ENCODE measurements at regions of chr1 and their contacts with region 1.

Region 1: DNA sequence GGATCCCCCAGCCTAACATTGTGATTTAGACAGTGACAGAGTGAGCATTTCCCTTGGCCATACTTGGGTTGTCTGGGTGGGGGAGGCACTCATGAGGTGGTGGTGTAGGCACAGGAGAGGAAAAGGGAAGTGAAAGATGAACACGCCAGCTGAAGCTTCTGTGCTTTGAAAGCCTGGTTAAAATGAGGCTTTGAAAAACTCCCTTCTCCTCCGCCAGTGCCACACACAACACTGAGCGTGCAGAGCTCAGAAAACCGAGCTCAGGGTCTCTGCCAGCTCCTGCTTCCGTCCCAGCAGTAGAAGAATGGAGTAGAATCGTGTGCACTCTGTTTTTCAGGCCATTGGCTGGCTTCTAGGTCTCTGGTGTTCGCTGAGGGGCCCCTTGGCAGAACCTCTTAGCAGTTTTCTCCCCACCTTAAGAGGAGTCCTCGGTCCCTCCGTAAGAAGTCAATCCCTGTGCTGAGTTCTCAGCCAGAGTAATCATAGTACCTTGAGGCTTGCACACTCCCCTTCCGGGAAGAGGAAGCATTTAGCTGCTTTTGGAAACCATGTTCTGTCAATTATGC is 12.9 kb downstream of the PLEKHM2 start:
- DNase-seq: peak; percentile 93
- ATAC-seq: peak; percentile 97
- H3K4me3 ChIP-seq: peak overlapping the region; percentile 62
- H3K27ac ChIP-seq: peak overlapping the region; percentile 90
- H3K4me1 ChIP-seq: peaks cover 14% of the 10 kb centered on the region
- H3K27me3 ChIP-seq: no peaks in the 10 kb centered on the region
- CTCF ChIP-seq: no peak
- EP300 ChIP-seq: peak; percentile 83 to 95; a peak in 3 of 4 replicates
- POLR2A ChIP-seq: peak; percentile 73
- RAD21 ChIP-seq: no peak; the same call in 1 of the 2 replicates

Region 2: DNA sequence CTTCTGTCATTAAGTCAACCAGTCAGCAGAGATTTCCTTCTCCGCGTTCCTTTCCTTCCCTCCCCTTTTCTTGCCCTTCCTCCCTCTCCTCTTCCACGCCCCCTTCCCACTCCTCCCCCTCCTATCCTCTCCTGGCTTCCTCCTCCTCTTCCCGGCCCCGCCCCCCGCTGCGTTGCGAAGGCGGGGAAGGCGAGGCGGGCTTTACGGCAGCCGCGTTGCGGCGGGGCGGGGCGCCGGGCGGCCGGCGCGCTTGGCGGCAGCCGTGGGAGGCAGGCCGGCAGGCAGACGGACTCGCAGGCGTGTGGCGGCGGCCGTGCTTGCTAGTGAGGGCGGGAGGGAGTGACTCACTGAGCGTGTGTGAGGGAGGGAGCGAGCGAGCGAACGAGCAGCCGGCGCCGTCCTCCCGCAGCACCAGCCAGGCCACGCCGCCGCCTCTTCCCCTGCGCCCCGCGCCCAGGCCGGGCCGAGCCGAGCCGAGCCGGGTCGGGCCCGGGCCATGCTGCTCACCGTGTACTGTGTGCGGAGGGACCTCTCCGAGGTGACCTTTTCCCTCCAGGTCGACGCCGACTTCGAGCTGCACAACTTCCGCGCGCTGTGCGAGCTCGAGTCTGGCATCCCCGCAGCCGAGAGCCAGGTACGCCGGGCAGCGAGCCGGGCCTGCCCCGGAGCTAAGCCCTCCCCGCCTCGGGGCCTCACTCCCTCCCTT is 79.7 kb before region 1 on chr1 and contains the start of gene DDI2:
- CTCF ChIA-PET with region 1: interaction called, 5 read pairs
- POLR2A ChIA-PET with region 1: interaction called, 9 read pairs
- RAD21 ChIA-PET with region 1: interaction called, 9 read pairs
- SMC1A ChIA-PET with region 1: interaction called, 5 read pairs
- in situ Hi-C with region 1: no loop called
- intact Hi-C with region 1: loop called (anchors 5 kb)
- DNase-seq: peak; percentile 79
- ATAC-seq: peak; percentile 92
- H3K4me3 ChIP-seq: peak within 1 kb of the TSS; percentile 90
- H3K27ac ChIP-seq: peak within 1 kb of the TSS; percentile 92
- H3K4me1 ChIP-seq: peaks cover 14% of the 10 kb centered on the region
- H3K27me3 ChIP-seq: no peaks in the 10 kb centered on the region
- CTCF ChIP-seq: no peak
- EP300 ChIP-seq: no peak
- POLR2A ChIP-seq: peak; percentile 95
- RAD21 ChIP-seq: no peak
- polyA plus RNA-seq, gene DDI2: 3.3 to 3.6 TPM

Region 3: GRCh38 chr1:15667362-15667761 is 29.7 kb before region 1 on chr1:
- CTCF ChIA-PET with region 1: no interaction called
- POLR2A ChIA-PET with region 1: interaction called, 4 read pairs
- RAD21 ChIA-PET with region 1: interaction called, 9 read pairs
- SMC1A ChIA-PET with region 1: interaction called, 11 read pairs
- in situ Hi-C with region 1: no loop called
- intact Hi-C with region 1: no loop called
- DNase-seq: no peak
- ATAC-seq: no peak
- H3K4me3 ChIP-seq: no peak overlapping the region
- H3K27ac ChIP-seq: no peak overlapping the region
- H3K4me1 ChIP-seq: no peaks in the 10 kb centered on the region
- H3K27me3 ChIP-seq: no peaks in the 10 kb centered on the region
- CTCF ChIP-seq: no peak
- EP300 ChIP-seq: no peak
- POLR2A ChIP-seq: 0 out of 2 replicates have a peak, but pooled peaks have one; percentile 21
- RAD21 ChIP-seq: no peak

Region 4: DNA sequence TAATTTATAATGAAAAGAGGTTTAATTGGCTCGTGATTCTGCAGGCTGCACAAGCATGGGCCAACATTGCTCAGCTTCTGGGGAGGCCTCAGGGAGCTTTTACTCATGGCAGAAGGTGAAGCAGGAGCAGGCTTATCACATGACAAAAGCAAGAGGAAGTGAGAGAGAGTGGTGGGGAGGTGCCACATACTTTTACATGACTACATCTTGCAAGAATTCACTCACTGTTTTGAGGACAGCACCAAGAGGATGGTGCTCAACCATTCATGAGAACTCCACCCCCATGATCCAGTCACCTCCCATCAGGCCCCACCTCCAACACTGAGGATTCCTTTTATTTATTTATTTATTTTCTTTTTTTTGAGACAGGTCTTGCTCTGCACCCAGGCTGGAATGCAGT is 18.5 kb before region 1 on chr1:
- CTCF ChIA-PET with region 1: interaction called, 5 read pairs
- POLR2A ChIA-PET with region 1: interaction called, 5 read pairs
- RAD21 ChIA-PET with region 1: interaction called, 22 read pairs
- SMC1A ChIA-PET with region 1: interaction called, 25 read pairs
- in situ Hi-C with region 1: no loop called
- intact Hi-C with region 1: no loop called
- DNase-seq: peak; percentile 53
- ATAC-seq: peak; percentile 86
- H3K4me3 ChIP-seq: no peak overlapping the region
- H3K27ac ChIP-seq: no peak overlapping the region
- H3K4me1 ChIP-seq: peaks cover 6% of the 10 kb centered on the region
- H3K27me3 ChIP-seq: no peaks in the 10 kb centered on the region
- CTCF ChIP-seq: no peak
- EP300 ChIP-seq: no peak
- POLR2A ChIP-seq: no peak
- RAD21 ChIP-seq: no peak

Region 5: DNA sequence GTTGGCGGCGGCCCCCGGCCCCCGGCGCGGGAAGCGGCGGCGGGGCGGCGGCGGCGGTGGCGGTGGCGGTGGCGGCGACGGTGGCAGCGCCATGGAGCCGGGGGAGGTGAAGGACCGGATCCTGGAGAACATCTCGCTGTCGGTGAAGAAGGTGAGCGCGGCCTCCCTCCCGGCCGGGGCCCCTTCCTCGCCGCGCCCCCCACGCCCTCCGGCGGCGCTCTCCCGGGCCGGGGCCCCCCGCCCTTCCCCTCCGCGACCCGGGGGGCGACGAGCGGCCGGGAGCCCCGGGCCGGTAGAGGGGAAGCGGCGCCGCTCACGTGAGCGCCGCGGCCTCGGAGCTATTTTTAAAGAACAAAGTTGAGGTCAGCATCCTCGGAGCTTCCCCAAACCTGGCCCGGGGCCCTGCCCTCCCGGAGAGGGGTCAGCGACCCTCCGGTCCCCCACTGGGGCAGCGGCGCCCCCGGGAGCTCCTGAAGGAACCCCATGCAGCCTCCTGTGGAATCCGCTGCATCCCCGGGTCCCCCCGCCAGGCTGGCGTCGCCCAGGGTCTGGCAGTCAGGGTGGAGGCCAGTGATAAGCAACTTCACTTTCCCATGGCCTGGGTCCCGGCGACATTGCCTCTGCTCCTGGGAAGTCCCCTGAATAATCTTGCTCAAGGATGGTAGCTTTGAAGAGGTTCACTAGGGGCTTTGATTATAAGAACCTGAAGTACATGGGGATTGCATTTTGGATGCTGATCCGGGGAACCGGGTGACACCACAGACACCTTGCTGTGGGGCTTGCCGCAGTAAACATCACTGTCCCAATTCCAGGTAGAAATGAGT is 12.4 kb before region 1 on chr1:
- CTCF ChIA-PET with region 1: interaction called, 23 read pairs
- POLR2A ChIA-PET with region 1: interaction called, 22 read pairs
- RAD21 ChIA-PET with region 1: interaction called, 22 read pairs
- SMC1A ChIA-PET with region 1: interaction called, 25 read pairs
- in situ Hi-C with region 1: no loop called
- intact Hi-C with region 1: no loop called
- DNase-seq: no peak
- ATAC-seq: peak; percentile 66
- H3K4me3 ChIP-seq: peak overlapping the region; percentile 100
- H3K27ac ChIP-seq: peak overlapping the region; percentile 85
- H3K4me1 ChIP-seq: no peaks in the 10 kb centered on the region; the same call in 1 of the 2 replicates
- H3K27me3 ChIP-seq: no peaks in the 10 kb centered on the region
- CTCF ChIP-seq: no peak
- EP300 ChIP-seq: no peak
- POLR2A ChIP-seq: peak; percentile 50; the same call in 1 of the 2 replicates
- RAD21 ChIP-seq: no peak

Region 6: DNA sequence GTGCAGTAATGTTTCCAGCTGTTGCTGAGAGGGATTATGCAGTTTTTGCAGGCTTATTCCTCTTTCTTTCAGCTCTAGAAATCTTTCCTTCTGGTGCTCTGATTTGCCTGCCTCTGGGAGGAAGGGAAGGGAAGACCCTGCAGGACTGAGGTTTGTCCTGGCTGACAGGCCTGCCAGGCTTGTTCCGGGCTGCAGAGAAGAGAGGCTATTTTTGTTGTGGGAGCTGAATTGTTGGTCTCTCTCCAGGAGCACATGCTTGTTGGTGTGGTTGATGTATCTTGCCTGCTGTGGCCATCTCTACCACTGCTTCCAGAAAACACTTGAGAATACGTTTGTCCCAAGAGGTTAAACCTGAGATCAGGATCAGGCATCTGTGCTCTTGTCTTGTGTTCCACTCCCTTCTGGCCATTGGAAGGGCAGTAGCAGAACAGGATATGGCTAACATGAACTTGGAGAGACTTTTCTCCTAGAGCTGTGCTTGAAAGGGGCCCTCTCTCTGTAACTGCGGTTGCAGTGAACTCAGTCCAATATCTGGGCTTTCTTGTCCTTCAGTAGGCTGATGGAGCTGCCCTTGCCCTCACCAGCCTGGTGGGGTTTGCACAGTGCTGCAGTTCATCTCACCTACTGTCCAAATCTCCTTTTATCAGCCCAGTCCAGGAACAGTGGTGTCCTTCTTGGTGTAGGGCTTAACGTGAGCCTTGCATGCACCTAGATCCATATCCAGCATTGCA is 17.5 kb after region 1 on chr1:
- CTCF ChIA-PET with region 1: interaction called, 3 read pairs
- POLR2A ChIA-PET with region 1: interaction called, 3 read pairs
- RAD21 ChIA-PET with region 1: interaction called, 3 read pairs
- SMC1A ChIA-PET with region 1: interaction called, 20 read pairs
- in situ Hi-C with region 1: no loop called
- intact Hi-C with region 1: no loop called
- DNase-seq: no peak
- ATAC-seq: no peak
- H3K4me3 ChIP-seq: no peak overlapping the region
- H3K27ac ChIP-seq: no peak overlapping the region
- H3K4me1 ChIP-seq: no peaks in the 10 kb centered on the region
- H3K27me3 ChIP-seq: no peaks in the 10 kb centered on the region
- CTCF ChIP-seq: no peak
- EP300 ChIP-seq: no peak
- POLR2A ChIP-seq: no peak
- RAD21 ChIP-seq: no peak

Measured in GM12878 (cell line).